RWPE1 (cell line): ENCODE measurements at regions of chr6 and their contacts with region 1.

Region 1: DNA sequence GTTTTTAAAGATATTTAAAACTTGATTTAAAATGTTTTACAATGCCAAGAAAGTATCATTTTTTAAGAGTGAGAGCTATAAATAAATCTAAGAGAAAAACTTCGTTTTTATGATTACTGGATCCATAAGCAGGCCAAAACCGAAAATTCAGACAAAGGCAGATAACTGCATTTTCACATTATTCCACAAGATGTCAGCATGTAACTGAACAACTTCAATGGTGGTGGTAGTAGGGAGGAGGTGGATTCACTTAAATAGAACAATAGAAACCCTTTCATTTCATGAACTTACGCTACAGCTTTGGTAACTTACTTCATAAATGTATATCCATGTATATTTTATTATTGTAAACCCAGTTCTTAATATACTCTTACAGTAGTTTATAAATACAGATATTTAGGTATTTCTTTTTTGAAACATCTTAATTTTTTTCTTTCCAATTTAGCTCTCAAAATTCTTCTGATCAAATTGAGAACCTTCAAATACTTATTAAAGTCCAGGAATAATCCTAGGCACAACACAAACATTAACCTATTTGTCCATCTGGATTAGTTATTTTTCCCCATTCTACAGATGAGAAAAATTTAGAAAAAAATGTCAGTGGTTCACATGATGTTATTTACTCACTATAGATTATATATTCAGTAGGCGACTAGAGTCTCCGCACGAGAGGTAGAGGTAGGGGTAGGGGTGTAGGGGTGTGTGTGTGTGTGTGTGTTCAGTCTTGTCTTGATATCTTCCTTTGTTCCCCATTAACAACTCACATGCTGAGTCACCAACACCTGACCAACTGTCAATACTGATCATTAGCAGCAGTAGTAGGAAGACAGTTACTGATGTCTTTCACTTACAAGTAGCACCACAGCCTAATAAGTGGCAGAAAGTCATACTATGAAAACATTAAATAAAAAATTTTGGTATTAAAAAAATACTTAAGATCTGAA is 111.5 kb downstream of the ARHGAP18 start:
- DNase-seq: peak; percentile 77
- H3K27ac ChIP-seq: no peak overlapping the region
- CTCF ChIP-seq: peak; percentile 88

Region 2: GRCh38 chr6:129510950-129511349 is 87.6 kb before region 1 on chr6:
- CTCF ChIA-PET with region 1: no interaction called
- POLR2A ChIA-PET with region 1: no interaction called
- DNase-seq: no peak
- H3K27ac ChIP-seq: no peak overlapping the region
- CTCF ChIP-seq: no peak

Region 3: DNA sequence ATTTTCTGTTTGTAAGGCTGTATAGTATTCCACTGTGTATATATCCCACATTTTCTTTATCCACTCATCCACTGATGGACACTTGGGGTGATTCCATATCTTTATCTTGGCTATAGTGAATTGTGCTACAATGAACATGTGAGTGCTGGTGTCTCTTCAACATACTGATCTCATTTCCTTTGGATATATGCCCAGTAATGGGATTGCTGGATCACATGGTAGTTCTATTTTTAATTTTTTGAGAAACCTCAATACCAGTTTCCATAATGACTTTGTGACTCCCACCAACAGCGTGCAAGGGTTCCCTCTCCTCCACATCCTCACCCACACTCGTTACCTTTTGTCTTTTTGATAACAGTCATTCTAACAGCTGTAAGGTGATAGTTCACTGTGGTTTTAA is 54.5 kb before region 1 on chr6:
- CTCF ChIA-PET with region 1: no interaction called
- POLR2A ChIA-PET with region 1: no interaction called
- DNase-seq: no peak
- H3K27ac ChIP-seq: no peak overlapping the region
- CTCF ChIP-seq: no peak

Region 4: GRCh38 chr6:129730477-129731165 is 132.1 kb after region 1 on chr6:
- CTCF ChIA-PET with region 1: interaction called, 31 read pairs
- POLR2A ChIA-PET with region 1: no interaction called
- DNase-seq: peak; percentile 20
- H3K27ac ChIP-seq: no peak overlapping the region
- CTCF ChIP-seq: peak; percentile 72

Region 5: DNA sequence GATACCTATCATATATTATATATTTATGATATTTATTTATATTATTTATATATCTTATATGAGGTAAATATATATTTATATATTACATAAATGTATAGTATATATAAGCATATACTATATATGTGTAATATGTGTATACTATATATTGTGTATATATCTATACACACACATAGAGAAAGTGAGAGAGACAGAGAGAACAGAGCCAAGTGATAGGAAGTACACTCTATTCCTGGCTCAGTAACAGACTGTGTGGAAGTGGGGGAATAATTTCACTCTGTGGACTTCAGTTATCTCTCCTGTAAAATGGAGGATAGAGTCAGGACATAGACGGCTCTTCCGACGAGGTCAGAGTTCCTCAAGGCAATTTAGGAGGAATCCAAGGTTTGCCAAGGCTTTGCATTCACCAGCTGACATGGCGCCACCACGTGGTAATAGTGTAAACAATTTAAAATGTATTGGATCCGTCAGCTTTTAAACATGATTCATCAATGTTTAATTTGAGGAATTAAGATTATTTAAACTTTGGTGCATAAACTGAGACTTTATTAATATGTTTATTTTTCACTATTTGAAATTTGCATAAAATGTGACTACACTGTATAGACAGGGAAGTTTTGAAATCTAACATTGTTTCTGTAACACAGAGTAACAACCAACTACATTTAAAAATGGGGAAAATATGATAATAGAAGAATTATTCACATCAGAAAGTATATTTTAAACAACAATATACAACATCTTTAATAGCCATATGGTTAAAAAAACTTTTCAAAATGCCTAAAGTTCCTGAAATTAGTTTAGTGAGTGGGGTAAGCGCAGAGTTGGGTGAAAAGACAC is 338.0 kb after region 1 on chr6:
- CTCF ChIA-PET with region 1: interaction called, 15 read pairs
- POLR2A ChIA-PET with region 1: no interaction called
- DNase-seq: peak; percentile 36
- H3K27ac ChIP-seq: no peak overlapping the region
- CTCF ChIP-seq: peak; percentile 79